ENCODE measurements at regions of chr1 and their contacts with region 1.

Region 1: DNA sequence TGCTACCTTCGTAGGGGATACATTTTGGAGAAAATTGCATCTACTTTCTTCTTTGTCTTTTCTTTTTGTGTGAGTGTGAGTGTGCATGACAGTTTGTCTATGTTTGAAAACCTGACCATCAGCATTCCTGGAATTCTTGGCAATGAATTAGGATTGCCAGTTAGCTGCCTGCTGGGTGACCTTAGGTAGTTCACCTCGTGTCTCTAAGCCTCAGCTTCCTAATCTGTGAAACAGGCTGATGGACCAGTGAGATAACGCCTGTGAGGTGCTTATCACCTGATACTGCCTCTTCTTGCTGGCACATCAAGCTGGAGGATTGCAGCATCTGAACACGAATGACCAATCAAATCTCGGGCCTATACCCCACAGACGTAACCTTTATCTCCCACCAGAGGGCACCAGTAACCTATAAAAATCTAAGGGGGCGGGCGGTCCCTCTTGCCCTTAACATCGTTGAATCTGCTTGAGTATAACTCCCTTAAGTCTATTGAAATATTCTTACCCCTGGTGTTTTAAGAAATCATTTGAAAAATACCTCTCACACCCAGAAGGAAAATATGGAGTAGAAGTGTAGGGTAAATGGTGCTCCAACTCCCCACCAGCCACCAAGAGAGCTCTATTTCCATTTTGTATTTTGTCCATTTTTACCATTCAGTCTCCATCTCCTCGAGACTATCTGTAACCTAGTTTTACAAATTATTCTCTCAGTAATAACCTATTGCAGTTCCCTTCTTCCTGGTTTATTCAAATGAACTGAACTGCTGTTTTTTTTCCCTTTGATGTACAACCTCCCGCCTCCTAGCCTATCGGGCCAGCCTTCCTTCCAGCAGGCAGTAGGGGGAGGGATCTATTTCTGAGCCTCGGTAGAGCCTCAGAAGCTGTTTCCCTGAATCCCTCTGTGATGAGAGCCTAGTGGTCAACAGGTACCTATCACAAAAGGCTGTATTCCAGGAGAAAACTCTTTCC is 49.7 kb downstream of the MDM4 start:
- DNase-seq: peak in 8 of 10 donors; percentile 37 to 75 (median 63)
- H3K4me3 ChIP-seq: peak overlapping the region in 36 of 59 donors; percentile 1 to 45 (median 28)
- H3K27ac ChIP-seq: peak overlapping the region in 15 of 59 donors; percentile 4 to 54 (median 23)
- H3K27me3 ChIP-seq: no peaks in the 10 kb centered on the region
- CTCF ChIP-seq: peak; percentile 59 to 90 (median 75)

Region 2: GRCh38 chr1:204647114-204647804 is 81.4 kb after region 1 on chr1:
- intact Hi-C with region 1: no loop called
- DNase-seq: peak in 1 of 10 donors; percentile 31
- H3K4me3 ChIP-seq: no peak overlapping the region
- H3K27ac ChIP-seq: no peak overlapping the region
- H3K27me3 ChIP-seq: no peaks in the 10 kb centered on the region
- CTCF ChIP-seq: no peak

Region 3: GRCh38 chr1:204763706-204764427 is 198.0 kb after region 1 on chr1:
- intact Hi-C with region 1: loop called (anchors 2 to 5 kb)
- DNase-seq: peak; percentile 45 to 89 (median 77)
- H3K4me3 ChIP-seq: peak overlapping the region in 5 of 59 donors; percentile 1 to 33 (median 28)
- H3K27ac ChIP-seq: peak overlapping the region in 9 of 59 donors; percentile 6 to 56 (median 32)
- H3K27me3 ChIP-seq: peaks cover 0 to 2% (median 0%) of the 10 kb centered on the region in 45 donors
- CTCF ChIP-seq: peak; percentile 56 to 91 (median 82)

Region 4: DNA sequence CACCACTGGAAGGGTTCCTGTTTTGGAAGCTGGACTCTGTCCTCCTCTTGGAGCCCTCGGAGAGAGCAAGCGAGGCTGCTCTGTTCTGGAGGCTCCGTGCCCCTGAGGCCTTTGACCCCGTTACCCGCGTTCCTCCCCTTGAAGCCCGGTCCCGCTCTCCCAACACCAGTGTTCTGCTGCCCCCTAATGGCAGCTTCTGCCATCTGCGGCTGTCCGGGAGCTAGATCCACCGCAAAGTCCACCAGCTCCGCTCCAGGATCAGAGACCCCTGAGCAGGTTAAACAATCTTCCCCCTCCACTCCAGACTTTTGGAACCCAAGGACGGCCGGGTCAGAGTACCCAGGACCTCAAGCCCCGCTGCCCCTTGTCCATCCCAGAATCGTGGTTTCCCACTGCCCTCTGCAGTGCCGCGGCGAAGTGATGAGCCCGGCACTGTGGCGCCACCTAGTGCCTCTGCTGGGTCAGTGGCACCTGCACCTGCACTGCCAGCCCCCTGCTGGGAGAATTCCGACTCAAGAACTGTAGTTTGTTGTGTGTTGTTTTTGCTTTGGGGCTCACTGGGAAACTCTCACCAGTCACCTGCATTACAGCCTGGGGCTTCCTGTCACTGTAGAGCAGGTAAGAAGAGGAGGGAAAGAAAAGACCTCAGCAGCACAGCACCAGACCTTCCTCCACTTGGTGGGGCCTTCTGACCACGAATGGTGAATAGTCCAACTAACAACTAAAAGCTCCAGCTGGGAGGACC is 241.2 kb after region 1 on chr1:
- intact Hi-C with region 1: loop called (anchors 1 to 2 kb)
- DNase-seq: peak; percentile 72 to 87 (median 82)
- H3K4me3 ChIP-seq: peak overlapping the region; percentile 27 to 77 (median 56)
- H3K27ac ChIP-seq: peak overlapping the region in 49 of 59 donors; percentile 1 to 89 (median 65)
- H3K27me3 ChIP-seq: no peaks in the 10 kb centered on the region
- CTCF ChIP-seq: peak in 55 of 56 donors; percentile 57 to 100 (median 98)